ENCODE measurements at regions of chr7 and their contacts with region 1.

Region 1: DNA sequence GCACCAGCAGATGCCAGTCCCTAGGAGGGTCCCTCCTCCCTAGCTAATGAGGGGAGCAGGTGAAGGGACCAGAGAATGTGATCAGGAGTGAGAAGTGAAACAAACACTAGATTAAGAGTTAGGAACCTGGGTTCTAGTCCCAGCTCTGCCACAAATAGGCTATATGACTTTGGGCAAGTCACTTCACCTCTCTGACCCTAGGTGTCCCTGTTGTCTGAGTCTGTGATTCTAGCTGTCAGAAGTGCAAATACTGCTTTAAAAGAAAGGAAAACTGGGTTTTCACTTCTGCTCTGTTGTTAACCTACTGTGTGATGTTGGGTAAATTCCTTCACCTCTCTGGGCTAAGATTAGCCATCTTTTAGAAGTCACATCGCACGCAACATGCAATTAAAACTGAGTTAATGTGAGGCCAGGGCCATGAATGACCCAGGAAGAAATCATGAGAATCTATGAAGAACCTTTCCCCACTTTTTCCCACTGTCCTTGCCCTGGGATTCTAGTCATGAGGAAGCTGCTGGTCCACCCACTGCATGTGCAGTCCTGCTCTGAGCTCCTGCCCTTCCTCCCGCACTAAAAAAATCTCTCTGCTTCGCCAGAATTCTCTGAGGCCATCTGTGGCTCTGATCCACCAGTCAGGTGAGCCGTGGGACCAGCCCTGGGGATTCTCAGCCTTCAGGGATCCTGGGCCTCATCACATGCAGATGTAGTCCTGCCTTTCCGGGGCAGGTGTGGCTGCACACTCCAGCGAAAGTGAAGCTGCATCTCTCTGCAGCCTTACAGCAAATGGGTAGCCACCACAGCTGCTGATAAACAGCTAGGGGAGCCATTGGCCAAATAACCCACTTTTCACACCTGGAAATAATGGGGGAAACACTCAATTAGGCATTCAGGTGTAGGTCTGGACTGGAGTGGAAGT is 181.7 kb downstream of the PLXNA4 start:
- DNase-seq: peak; percentile 43
- H3K4me3 Mint-ChIP-seq: no peak overlapping the region
- H3K27ac Mint-ChIP-seq: no peak overlapping the region
- H3K4me1 Mint-ChIP-seq: peaks cover 5% of the 10 kb centered on the region
- H3K27me3 Mint-ChIP-seq: peaks cover 2% of the 10 kb centered on the region

Region 2: DNA sequence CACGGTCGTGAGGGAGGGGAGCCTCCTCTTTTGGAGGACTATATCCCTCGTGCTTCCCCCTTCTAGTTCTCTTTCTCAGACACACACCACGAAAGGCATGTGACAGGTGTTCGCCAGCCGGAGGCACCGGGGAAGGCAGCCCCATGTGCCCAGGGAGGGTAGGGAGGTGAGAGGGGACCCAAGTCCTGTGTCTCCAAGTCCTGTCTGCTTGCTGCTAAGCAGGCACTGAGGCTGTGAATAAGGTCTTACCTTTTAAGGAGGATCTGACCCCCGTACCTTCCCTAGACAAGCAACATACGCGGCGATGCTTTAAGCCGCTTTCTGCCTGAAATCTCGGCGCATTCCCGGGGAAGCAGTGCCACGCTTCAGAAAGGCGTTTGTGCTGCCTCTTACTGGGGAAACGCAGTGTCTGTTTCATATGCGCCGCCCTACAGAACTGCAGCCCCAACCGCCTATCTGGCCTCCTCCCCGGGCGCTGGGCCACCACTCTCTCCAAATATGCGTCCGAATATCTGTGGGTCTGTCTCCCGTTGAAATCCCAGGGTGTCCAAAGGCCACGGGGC is 181.0 kb after region 1 on chr7:
- CTCF ChIA-PET with region 1: interaction called, 32 read pairs
- intact Hi-C with region 1: loop called (anchors 1 kb)
- DNase-seq: peak; percentile 21
- H3K4me3 Mint-ChIP-seq: peak overlapping the region; percentile 28
- H3K27ac Mint-ChIP-seq: no peak overlapping the region
- H3K4me1 Mint-ChIP-seq: peaks cover 9% of the 10 kb centered on the region
- H3K27me3 Mint-ChIP-seq: peaks cover 67% of the 10 kb centered on the region

Region 3: DNA sequence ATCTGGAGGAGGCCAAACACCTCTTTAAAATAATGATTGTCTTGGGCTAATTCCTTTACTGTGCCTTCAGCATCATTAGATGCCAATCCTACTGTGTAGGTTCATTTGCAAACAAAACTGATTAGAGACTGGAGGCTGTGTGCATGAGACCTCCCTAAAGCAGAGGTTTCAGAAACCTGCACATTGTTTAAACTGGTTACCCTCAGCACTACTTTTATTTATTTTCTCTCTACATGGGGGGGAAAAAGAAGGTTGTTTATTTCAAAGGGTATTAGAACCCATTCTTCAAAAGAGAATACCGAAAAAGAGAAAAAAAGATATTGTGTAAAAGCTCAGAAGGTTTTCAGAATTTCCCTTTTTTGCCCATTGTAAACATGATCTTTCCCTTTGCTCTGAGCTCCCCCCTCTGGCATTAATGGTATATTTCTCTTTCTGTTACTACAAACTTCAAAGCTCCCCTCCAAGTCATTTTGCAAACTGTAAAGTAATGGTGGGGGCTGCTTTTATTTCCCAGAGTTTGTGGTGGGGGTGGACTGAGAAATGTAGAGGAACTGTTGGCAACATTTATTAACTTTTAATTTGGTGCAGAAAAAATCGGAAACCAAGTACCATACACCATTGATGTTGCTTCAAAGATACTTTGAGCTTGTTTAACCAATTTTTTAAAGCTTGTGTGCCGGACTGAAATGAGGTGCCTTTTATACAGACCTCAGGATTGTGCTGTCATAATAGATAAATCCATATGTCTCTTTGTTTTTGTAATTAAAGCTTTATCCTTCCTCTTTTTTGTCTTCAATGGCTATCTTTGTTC is 1039.7 kb after region 1 on chr7:
- CTCF ChIA-PET with region 1: no interaction called
- intact Hi-C with region 1: loop called (anchors 10 kb)
- DNase-seq: peak; percentile 8
- H3K4me3 Mint-ChIP-seq: no peak overlapping the region
- H3K27ac Mint-ChIP-seq: no peak overlapping the region
- H3K4me1 Mint-ChIP-seq: peaks cover 2% of the 10 kb centered on the region
- H3K27me3 Mint-ChIP-seq: no peaks in the 10 kb centered on the region

Measured in activated naive CD4-positive, alpha-beta T cell treated with anti-CD3 and anti-CD28 coated beads for 36 hours (primary cell).